ENCODE measurements at regions of chr2 and their contacts with region 1.

Region 1: GRCh38 chr2:73926493-73927338 is at the start of gene DGUOK:
- DNase-seq: peak; percentile 97
- H3K4me3 Mint-ChIP-seq: peak within 1 kb of the TSS; percentile 91
- H3K27ac Mint-ChIP-seq: peak within 1 kb of the TSS; percentile 88
- H3K4me1 Mint-ChIP-seq: peaks cover 56% of the 10 kb centered on the region
- H3K27me3 Mint-ChIP-seq: no peaks in the 10 kb centered on the region
- total RNA-seq, gene DGUOK: 92.8 and 98.0 TPM in 2 replicates

Region 2: GRCh38 chr2:72427022-72427861 is 1499.5 kb before region 1 on chr2:
- intact Hi-C with region 1: no loop called
- DNase-seq: no peak
- H3K4me3 Mint-ChIP-seq: no peak overlapping the region
- H3K27ac Mint-ChIP-seq: no peak overlapping the region
- H3K4me1 Mint-ChIP-seq: no peaks in the 10 kb centered on the region
- H3K27me3 Mint-ChIP-seq: no peaks in the 10 kb centered on the region

Region 3: GRCh38 chr2:72917138-72917871 is 1009.4 kb before region 1 on chr2 and contains the start of gene EMX1:
- intact Hi-C with region 1: no loop called
- DNase-seq: no peak
- H3K4me3 Mint-ChIP-seq: peak within 1 kb of the TSS; percentile 22
- H3K27ac Mint-ChIP-seq: peak within 1 kb of the TSS; percentile 61
- H3K4me1 Mint-ChIP-seq: peaks cover 18% of the 10 kb centered on the region
- H3K27me3 Mint-ChIP-seq: peaks cover 69% of the 10 kb centered on the region
- total RNA-seq, gene EMX1: not detected in 2 replicates

Region 4: GRCh38 chr2:73886357-73886756 is 40.4 kb before region 1 on chr2:
- intact Hi-C with region 1: loop called (anchors 1 kb)
- DNase-seq: no peak
- H3K4me3 Mint-ChIP-seq: peak overlapping the region; percentile 63
- H3K27ac Mint-ChIP-seq: peak overlapping the region; percentile 84
- H3K4me1 Mint-ChIP-seq: peaks cover 29% of the 10 kb centered on the region
- H3K27me3 Mint-ChIP-seq: peaks cover 4% of the 10 kb centered on the region

Region 5: DNA sequence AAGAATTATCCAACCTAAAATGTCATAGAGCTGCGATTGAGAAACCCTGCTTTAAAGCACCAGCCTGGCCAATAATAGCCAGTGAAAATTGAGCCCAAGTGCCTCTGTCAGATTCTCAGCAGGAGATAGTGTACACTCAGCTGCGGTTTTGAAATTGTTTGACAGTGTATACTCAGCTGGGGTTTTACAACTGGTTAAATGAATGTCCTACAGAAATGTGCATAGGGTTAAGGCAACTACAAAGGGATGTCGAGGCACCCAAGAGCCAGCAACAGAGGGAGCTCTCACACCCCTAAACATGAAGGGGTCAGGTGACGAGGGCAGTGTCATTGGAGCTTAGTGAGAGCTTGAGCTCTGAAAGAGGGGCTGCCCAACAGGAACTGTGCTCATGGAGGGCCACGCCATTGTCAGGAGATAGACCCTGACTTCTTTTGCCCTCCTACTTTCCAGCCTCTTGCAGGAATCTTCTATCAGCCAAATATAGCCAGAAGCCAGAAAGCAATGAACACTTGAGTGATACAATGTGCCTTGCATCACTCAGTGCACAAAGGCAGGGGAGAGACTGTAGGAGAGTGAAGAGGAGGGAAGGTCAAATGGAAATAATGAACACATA is 18.8 kb before region 1 on chr2:
- intact Hi-C with region 1: no loop called
- DNase-seq: no peak
- H3K4me3 Mint-ChIP-seq: no peak overlapping the region
- H3K27ac Mint-ChIP-seq: no peak overlapping the region
- H3K4me1 Mint-ChIP-seq: peaks cover 9% of the 10 kb centered on the region
- H3K27me3 Mint-ChIP-seq: no peaks in the 10 kb centered on the region

Region 6: DNA sequence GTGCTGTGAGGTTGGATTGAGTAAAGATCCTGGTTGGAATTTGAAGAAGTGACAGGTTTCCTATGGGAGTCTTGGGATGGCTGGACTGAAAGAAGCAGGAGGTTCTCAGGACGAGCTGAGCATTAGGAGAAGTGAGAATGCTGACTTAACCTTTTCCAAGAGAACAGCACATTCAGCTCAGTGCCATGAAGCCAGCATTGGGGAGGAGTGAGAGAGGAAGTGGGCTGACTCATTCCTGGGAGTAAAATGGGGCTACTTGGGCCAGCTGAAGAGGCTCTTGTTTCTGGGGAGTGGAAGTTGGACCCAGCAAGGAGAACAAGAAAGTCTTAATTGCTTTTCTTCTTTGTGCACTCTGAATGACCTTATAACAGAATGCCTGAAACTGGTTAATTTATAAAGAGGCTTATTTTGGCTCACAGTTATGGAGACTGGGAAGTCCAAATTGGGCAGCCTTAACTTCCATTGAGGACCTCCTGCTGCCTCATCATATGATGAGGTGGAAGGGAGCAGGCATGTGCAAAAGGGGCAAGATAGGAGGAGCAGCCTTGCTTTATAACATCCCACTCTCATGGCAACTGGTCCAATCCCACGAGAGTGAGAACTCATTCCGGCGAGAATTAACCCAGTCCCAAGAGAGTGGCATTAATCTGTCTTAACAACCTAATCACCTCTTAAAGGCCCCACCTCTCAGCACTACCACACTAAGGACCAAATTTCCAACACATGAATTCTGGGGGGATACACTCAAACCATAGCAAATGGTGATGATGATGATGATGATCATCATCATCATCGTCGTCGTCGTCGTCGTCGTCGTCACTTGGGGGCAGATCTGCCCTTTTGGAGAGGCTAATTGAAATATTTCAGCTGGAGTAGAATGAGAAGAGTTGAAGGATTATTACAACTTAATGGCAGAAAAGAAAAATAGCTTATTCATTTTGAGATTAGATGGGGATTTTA is 26.1 kb after region 1 on chr2:
- intact Hi-C with region 1: no loop called
- DNase-seq: no peak
- H3K4me3 Mint-ChIP-seq: no peak overlapping the region
- H3K27ac Mint-ChIP-seq: peak overlapping the region; percentile 36
- H3K4me1 Mint-ChIP-seq: peaks cover 57% of the 10 kb centered on the region
- H3K27me3 Mint-ChIP-seq: no peaks in the 10 kb centered on the region

Region 7: DNA sequence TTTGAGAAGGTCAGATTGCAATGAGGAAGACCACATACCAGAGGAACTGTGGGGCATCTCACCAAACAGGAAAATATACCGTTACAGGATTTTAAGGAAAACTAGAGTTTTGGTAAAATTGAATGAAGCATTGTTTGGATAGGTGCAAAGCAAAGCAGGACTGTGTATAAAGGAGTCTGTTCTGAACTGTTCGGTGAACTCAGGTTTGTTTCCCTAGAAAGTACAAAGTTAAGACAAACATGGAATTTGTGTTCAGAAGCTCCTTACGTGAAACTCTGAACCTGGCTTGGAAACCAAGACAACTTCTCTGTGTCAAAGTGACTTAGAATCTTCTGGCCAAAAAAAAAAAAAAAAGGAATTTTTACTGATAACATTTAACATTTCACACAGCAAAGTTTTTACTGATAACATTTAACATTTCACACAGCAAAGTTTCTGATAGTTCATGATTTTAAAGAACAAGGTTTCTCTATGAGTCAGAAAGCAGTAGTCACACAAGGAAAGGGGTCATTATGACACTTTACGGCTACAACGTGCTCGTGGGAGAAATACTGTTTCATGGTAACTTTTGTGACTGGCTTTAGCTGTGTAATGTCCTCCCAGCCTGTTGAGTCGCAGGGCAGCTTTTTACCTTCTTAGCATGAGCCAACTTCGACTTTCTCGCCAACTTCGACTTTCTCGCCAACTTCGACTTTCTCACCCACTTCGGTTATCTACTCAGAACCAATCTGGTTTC is 36.8 kb after region 1 on chr2:
- intact Hi-C with region 1: loop called (anchors 1 kb)
- DNase-seq: no peak
- H3K4me3 Mint-ChIP-seq: peak overlapping the region; percentile 1
- H3K27ac Mint-ChIP-seq: peak overlapping the region; percentile 86
- H3K4me1 Mint-ChIP-seq: peaks cover 30% of the 10 kb centered on the region
- H3K27me3 Mint-ChIP-seq: no peaks in the 10 kb centered on the region

Region 8: DNA sequence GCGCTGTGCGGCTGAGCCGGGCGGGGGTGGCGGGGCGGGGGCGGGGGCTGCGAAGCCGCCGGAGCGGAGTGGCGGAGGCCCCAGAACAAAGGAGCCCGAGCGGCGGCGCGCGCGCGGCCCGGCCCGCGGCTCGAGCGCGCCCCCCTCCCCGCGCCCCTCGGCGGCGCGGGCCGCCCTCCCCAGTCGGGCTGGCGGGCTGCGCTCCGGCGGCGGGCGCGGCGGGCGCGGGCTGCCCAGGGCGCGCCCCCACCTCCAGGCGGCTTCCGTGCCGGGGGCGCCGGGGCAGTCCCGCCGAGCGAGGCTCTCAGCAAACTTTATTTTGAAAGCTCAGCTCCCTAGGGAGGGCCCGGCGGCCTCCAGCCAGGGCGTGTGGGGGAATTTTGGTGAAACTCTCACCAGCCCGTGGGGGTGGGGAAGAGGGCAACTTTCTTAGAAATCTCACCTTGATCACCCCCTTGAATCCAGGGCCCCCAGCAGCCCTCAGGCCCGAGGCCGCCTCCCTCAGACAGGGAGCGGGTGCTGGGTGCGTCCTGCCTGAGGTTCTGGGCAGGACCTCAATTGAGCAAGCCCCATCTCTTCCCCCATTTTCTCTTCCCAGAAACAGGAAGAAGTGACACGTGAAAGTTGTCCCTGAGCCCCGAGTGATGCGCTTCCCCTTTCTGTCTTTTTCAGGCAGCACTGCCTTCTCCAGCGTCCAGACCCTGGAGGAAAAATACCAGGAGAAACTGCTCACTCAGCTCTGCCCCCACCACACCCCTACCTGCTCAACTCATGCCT is 58.8 kb after region 1 on chr2:
- intact Hi-C with region 1: loop called (anchors 1 kb)
- DNase-seq: no peak
- H3K4me3 Mint-ChIP-seq: peak overlapping the region; percentile 81
- H3K27ac Mint-ChIP-seq: peak overlapping the region; percentile 91
- H3K4me1 Mint-ChIP-seq: peaks cover 81% of the 10 kb centered on the region
- H3K27me3 Mint-ChIP-seq: peaks cover 29% of the 10 kb centered on the region

Region 9: GRCh38 chr2:74031221-74031620 is 104.5 kb after region 1 on chr2:
- intact Hi-C with region 1: loop called (anchors 5 kb)
- DNase-seq: no peak
- H3K4me3 Mint-ChIP-seq: peak overlapping the region; percentile 45
- H3K27ac Mint-ChIP-seq: peak overlapping the region; percentile 45
- H3K4me1 Mint-ChIP-seq: peaks cover 67% of the 10 kb centered on the region
- H3K27me3 Mint-ChIP-seq: no peaks in the 10 kb centered on the region

Region 10: DNA sequence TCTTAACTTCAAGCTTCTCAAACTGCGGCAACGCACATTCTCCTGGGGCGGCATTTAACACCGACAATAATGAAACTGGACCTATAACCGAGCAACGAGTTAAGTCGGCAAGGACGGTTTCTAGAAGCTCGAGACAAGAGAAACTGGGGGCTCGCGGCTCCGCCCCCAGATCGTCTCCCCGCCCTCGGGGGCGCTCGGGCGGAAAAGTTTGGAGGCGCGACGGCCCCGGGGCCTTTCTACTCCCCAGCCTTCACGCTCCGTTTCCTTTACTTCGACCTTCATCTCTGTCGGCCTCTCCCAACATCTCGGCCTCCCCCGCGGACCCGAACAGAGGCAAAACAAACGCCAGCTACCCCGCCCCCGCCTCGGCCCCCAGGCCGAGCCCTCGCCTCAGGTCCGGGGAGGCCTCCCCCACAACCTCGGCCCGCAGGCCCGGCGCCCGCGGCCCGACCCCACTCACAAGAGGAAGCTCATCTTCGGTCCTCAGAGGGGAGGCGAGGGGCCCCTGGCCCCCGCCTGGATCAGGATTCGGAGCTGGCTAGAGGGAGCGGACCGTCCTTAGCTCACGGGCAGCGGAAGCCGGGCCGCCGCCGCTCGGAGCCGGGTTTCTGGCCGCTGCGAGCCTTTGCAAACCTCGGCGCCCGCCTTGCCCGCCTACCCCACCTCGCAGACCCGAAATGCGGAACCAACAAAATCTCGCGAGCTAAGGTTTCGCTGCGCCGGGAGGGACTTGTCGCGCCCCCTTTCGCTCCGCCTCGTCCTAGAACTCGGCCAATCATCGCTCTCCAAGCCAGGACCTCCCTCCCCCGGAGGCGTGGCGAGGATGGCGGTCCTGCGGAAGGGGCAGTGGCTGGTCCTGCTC is 251.7 kb after region 1 on chr2 and contains the start of gene MOB1A:
- intact Hi-C with region 1: loop called (anchors 1 kb)
- DNase-seq: peak; percentile 99
- H3K4me3 Mint-ChIP-seq: peak within 1 kb of the TSS; percentile 88
- H3K27ac Mint-ChIP-seq: peak within 1 kb of the TSS; percentile 85
- H3K4me1 Mint-ChIP-seq: peaks cover 40% of the 10 kb centered on the region
- H3K27me3 Mint-ChIP-seq: no peaks in the 10 kb centered on the region
- total RNA-seq, gene MOB1A: 207 and 221 TPM in 2 replicates